CD8-positive, alpha-beta T cell (primary cell): ENCODE measurements at regions of chr3 and their contacts with region 1.

Region 1: GRCh38 chr3:158295771-158296170 is 185.9 kb downstream of the RSRC1 start:
- DNase-seq: no peak
- ATAC-seq: no peak
- H3K4me3 ChIP-seq: no peak overlapping the region
- H3K4me3 Mint-ChIP-seq: no peak overlapping the region
- H3K27ac ChIP-seq: no peak overlapping the region
- H3K27ac Mint-ChIP-seq: no peak overlapping the region
- H3K4me1 ChIP-seq: no peaks in the 10 kb centered on the region
- H3K4me1 Mint-ChIP-seq: no peaks in the 10 kb centered on the region
- H3K27me3 ChIP-seq: no peaks in the 10 kb centered on the region
- H3K27me3 Mint-ChIP-seq: no peaks in the 10 kb centered on the region
- CTCF ChIP-seq: no peak

Region 2: GRCh38 chr3:158233791-158234190 is 62.0 kb before region 1 on chr3:
- CTCF ChIA-PET with region 1: no interaction called
- POLR2A ChIA-PET with region 1: no interaction called
- intact Hi-C with region 1: loop called in 1 of 2 experiments (anchors 5 kb)
- DNase-seq: no peak
- ATAC-seq: no peak
- H3K4me3 ChIP-seq: no peak overlapping the region
- H3K4me3 Mint-ChIP-seq: no peak overlapping the region
- H3K27ac ChIP-seq: no peak overlapping the region
- H3K27ac Mint-ChIP-seq: no peak overlapping the region
- H3K4me1 ChIP-seq: no peaks in the 10 kb centered on the region
- H3K4me1 Mint-ChIP-seq: no peaks in the 10 kb centered on the region
- H3K27me3 ChIP-seq: no peaks in the 10 kb centered on the region
- H3K27me3 Mint-ChIP-seq: no peaks in the 10 kb centered on the region
- CTCF ChIP-seq: no peak